ENCODE measurements at regions of chr10 and their contacts with region 1.

Region 1: GRCh38 chr10:70272925-70273316 is 10.9 kb downstream of the NPFFR1 start:
- DNase-seq: no peak
- H3K4me3 ChIP-seq: no peak overlapping the region
- H3K27ac ChIP-seq: no peak overlapping the region
- H3K4me1 ChIP-seq: no peaks in the 10 kb centered on the region
- H3K27me3 ChIP-seq: no peaks in the 10 kb centered on the region
- CTCF ChIP-seq: peak; percentile 48

Region 2: GRCh38 chr10:70355051-70356021 is 82.4 kb after region 1 on chr10:
- intact Hi-C with region 1: loop called (anchors 10 kb)
- DNase-seq: no peak
- H3K4me3 ChIP-seq: no peak overlapping the region
- H3K27ac ChIP-seq: peak overlapping the region; percentile 50
- H3K4me1 ChIP-seq: no peaks in the 10 kb centered on the region
- H3K27me3 ChIP-seq: no peaks in the 10 kb centered on the region
- CTCF ChIP-seq: no peak